Posterior cingulate gyrus (tissue), 11 donors: ENCODE measurements at regions of chr21 and their contacts with region 1.

Region 1: DNA sequence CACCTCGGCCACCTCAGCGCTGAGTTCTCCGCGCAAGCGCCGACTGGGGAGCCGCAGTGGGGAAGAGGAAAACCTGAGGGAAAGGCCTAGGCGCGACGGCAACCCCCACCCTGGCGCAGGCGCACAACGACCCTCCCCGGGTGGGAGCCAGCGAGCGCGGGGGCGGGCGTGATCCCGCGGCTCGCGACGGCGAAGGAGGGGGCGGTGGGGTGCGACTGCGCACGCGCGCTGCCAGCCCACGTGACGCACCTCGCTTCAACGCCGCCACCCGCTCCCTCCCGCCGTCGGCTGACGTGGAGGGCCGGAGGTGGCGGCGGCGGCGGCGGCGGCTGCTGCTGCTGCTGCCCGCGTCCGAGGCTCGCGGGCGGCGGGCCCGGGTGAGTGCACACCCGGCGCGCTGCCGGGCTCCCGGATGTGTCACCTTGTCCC is at the starts of genes PIGP and TTC3:
- DNase-seq: peak; percentile 91 to 99 (median 95)

Region 2: DNA sequence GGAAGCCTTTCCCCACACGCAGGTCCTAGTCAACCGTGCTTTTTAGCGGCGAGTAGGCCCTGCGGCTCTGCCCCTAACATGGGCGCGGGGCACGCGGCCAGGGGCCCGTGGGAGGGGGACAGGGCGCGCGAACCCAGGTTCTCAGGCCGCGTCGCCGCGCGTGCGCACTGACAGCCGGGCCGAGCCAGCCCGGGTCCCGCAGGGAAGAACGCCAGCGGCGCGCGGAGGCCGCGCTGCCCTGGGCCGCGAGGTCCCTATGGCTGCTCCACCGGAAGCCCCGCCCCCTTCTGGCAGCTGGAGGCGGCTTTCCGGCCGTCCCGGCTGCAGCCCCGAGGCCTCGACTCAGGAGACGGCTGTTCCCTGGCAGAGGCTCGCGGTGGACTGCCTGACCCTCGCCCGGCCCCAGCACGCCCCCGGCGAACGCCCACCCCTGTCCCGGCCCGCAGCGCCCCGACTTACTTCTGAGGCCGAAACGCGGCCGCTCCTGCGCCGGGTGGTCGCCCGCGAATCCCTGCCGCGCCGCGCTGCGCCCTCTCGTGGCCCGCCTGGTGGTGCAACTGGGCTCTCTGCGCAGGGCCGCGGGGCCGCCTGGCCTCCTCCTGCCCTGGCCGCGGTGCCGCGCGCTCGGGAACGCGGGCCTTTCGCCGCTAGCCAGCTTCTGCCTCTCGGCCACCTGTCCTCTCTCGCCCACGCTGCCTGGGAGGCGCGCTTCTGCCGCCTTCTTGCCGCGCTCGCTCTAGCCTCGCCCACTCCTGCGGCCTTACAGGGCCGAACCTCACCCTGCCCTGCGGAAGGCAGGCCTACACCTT is 83.1 kb before region 1 on chr21:
- intact Hi-C with region 1: loop called (anchors 5 kb)
- DNase-seq: peak; percentile 81 to 98 (median 88)

Region 3: DNA sequence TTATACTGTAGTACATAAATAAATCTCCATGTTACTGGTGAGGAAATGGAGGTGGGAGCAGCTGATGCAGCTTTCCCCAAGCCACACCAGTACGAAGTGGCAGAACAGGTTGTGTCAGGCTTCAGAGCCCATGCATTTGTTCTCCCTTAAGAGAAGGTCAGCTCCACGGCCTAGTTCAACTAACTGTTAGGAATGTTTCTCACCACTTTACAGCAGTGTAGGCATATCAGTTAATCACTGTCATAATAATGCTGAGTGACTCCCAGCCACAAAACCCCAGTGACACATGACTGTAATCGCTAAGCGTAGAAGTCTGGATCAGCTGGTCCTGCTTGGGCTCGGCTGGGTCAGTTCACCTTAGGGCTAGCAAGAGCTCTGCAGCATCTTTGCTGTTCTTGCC is 103.7 kb after region 1 on chr21:
- intact Hi-C with region 1: no loop called
- DNase-seq: no peak